ENCODE measurements at regions of chr14 and their contacts with region 1.

Region 1: GRCh38 chr14:74612350-74613021 is 449 bp upstream of the LTBP2 start:
- DNase-seq: peak; percentile 67 to 82 (median 81)
- H3K4me3 ChIP-seq: peak overlapping the region; percentile 49 to 89 (median 68)
- H3K4me3 Mint-ChIP-seq: peak overlapping the region; percentile 82 to 90
- H3K27ac ChIP-seq: no peak overlapping the region
- H3K27ac Mint-ChIP-seq: no peak overlapping the region
- H3K4me1 ChIP-seq: peaks cover 47 to 59% of the 10 kb centered on the region in 2 donors
- H3K4me1 Mint-ChIP-seq: peaks cover 48% of the 10 kb centered on the region
- H3K27me3 ChIP-seq: peaks cover 10 to 29% of the 10 kb centered on the region in 2 donors
- H3K27me3 Mint-ChIP-seq: peaks cover 29 to 48% (median 42%) of the 10 kb centered on the region in 3 donors
- CTCF ChIP-seq: peak; percentile 75

Region 2: GRCh38 chr14:74641601-74642391 is 29.3 kb after region 1 on chr14:
- intact Hi-C with region 1: loop called in 1 of 2 experiments (anchors 5 kb)
- DNase-seq: no peak
- H3K4me3 ChIP-seq: no peak overlapping the region
- H3K4me3 Mint-ChIP-seq: no peak overlapping the region
- H3K27ac ChIP-seq: no peak overlapping the region
- H3K27ac Mint-ChIP-seq: no peak overlapping the region
- H3K4me1 ChIP-seq: no peaks in the 10 kb centered on the region
- H3K4me1 Mint-ChIP-seq: peaks cover 6% of the 10 kb centered on the region
- H3K27me3 ChIP-seq: no peaks in the 10 kb centered on the region
- H3K27me3 Mint-ChIP-seq: peaks cover 2 to 5% (median 4%) of the 10 kb centered on the region in 3 donors
- CTCF ChIP-seq: no peak

Region 3: DNA sequence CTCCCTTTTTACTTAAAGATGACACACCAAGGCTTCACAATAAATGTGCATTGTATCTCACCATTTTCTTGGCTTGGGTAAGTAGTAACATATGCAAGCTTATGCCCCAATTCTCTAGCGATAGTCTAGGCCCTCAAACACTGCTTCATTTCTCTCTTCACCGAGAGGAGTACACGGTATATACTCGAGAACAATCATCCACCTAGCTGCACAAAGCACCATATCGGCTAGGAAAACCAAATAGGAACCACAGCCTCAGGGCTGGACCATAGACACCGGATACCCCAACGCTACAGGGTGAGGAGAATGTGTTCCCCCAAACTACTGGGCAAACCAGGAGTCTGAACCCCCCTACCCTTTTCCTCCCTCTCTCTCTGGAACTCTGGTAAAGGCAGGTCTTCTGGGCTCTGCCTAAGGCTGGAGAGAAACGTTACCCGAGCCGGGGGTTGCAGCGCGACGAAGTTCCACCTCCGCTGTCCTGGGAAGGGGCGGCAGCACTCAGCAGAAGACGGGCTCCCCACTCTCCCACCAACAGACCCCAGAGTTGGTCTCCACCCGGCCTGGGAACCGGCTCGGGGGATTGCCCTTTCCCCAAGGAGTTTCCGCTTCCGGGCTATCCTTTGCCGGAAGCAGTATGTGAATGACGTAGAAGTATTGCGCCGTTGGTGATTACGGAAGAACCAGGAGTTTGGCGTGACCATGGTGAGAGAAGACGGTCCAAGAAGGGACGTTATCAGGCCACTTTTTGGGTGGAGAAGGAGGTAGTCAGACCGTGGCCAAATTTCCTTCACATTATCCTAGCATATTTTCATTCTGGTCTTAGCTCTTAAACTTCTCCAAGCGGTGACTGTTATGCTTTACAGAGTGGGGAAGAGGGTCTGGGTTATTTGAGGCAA is 100.3 kb after region 1 on chr14 and contains the starts of genes AREL1 and FCF1:
- intact Hi-C with region 1: loop called in 1 of 2 experiments (anchors 5 kb)
- DNase-seq: peak; percentile 91 to 96 (median 94)
- H3K4me3 ChIP-seq: peak within 1 kb of the TSS; percentile 92 to 95 (median 94)
- H3K4me3 Mint-ChIP-seq: peak within 1 kb of the TSS; percentile 92 to 97
- H3K27ac ChIP-seq: peak within 1 kb of the TSS; percentile 78 to 97
- H3K27ac Mint-ChIP-seq: peak within 1 kb of the TSS; percentile 97 to 100 (median 98)
- H3K4me1 ChIP-seq: peaks cover 19 to 27% of the 10 kb centered on the region in 2 donors
- H3K4me1 Mint-ChIP-seq: peaks cover 31% of the 10 kb centered on the region
- H3K27me3 ChIP-seq: no peaks in the 10 kb centered on the region
- H3K27me3 Mint-ChIP-seq: peaks cover 0 to 2% (median 0%) of the 10 kb centered on the region in 3 donors
- CTCF ChIP-seq: no peak
- polyA plus RNA-seq, gene AREL1: 12.5 to 23.3 (median 20.0) TPM
- polyA plus RNA-seq, gene FCF1: 14.8 to 22.6 (median 17.5) TPM

Region 4: GRCh38 chr14:74784634-74785033 is 172.1 kb after region 1 on chr14:
- intact Hi-C with region 1: no loop called
- DNase-seq: no peak
- H3K4me3 ChIP-seq: no peak overlapping the region
- H3K4me3 Mint-ChIP-seq: no peak overlapping the region
- H3K27ac ChIP-seq: no peak overlapping the region
- H3K27ac Mint-ChIP-seq: peak overlapping the region in 2 of 7 donors; percentile 0 to 65
- H3K4me1 ChIP-seq: no peaks in the 10 kb centered on the region
- H3K4me1 Mint-ChIP-seq: peaks cover 3% of the 10 kb centered on the region
- H3K27me3 ChIP-seq: no peaks in the 10 kb centered on the region
- H3K27me3 Mint-ChIP-seq: no peaks in the 10 kb centered on the region
- CTCF ChIP-seq: no peak

Region 5: GRCh38 chr14:74804219-74804826 is 191.8 kb after region 1 on chr14:
- intact Hi-C with region 1: loop called in 1 of 2 experiments (anchors 2 kb)
- DNase-seq: peak in 1 of 3 donors; percentile 6
- H3K4me3 ChIP-seq: no peak overlapping the region
- H3K4me3 Mint-ChIP-seq: no peak overlapping the region
- H3K27ac ChIP-seq: no peak overlapping the region
- H3K27ac Mint-ChIP-seq: peak overlapping the region in 2 of 7 donors; percentile 6 to 10
- H3K4me1 ChIP-seq: no peaks in the 10 kb centered on the region
- H3K4me1 Mint-ChIP-seq: no peaks in the 10 kb centered on the region
- H3K27me3 ChIP-seq: no peaks in the 10 kb centered on the region
- H3K27me3 Mint-ChIP-seq: peaks cover 0 to 2% (median 0%) of the 10 kb centered on the region in 3 donors
- CTCF ChIP-seq: peak; percentile 61

Region 6: GRCh38 chr14:74905375-74906142 is 293.1 kb after region 1 on chr14:
- intact Hi-C with region 1: loop called (anchors 5 kb)
- DNase-seq: peak; percentile 49 to 67 (median 56)
- H3K4me3 ChIP-seq: no peak overlapping the region
- H3K4me3 Mint-ChIP-seq: no peak overlapping the region
- H3K27ac ChIP-seq: peak overlapping the region in 1 of 2 donors; percentile 15
- H3K27ac Mint-ChIP-seq: peak overlapping the region in 3 of 7 donors; percentile 25 to 83 (median 43)
- H3K4me1 ChIP-seq: no peaks in the 10 kb centered on the region
- H3K4me1 Mint-ChIP-seq: no peaks in the 10 kb centered on the region
- H3K27me3 ChIP-seq: no peaks in the 10 kb centered on the region
- H3K27me3 Mint-ChIP-seq: peaks cover 0 to 6% (median 1%) of the 10 kb centered on the region in 3 donors
- CTCF ChIP-seq: peak; percentile 92